ENCODE measurements at regions of chr2 and their contacts with region 1.

Region 1: DNA sequence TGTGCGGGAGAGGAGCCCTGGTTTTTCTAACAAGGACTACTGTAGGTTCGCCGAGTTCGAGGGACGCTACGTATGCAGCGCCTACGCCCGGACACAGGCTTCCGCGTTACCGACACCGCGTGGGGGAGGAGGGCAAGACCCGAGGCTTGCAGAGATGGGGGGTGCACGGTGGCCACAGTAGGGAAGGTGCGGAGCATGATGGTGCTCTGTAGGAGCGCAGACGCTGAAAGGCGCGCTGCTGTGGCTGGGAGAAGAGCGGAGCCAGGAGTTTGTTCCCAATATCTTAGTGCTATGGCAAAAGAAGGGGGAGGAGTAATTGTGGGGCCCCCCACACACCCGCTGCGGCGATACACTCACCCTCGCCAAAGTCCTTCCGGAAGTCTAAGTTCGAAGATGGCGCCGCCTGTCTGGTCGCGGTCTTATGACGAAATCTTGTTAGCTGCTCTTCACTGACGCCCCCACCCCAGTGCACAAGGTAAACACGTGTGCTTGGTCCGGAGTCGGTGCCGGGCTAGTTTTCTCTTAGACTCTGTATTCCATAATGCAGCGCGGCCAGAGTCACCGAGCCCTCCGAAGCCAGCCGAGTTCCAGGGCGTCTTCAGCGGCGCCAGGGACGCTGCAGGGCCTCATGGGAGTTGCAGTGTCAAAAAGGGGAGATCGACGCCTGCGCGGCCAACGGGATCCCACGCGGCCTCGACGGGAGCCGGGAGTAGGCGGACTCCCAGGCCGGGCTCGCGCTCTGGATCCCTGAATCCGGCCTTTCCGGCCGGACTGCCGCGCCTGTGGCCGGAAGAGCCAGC is at the start of gene GTF3C2:
- DNase-seq: peak; percentile 97
- H3K4me3 Mint-ChIP-seq: peak within 1 kb of the TSS; percentile 99
- H3K27ac Mint-ChIP-seq: peak within 1 kb of the TSS; percentile 100
- H3K4me1 Mint-ChIP-seq: peaks cover 42% of the 10 kb centered on the region
- H3K27me3 Mint-ChIP-seq: peaks cover 2% of the 10 kb centered on the region
- total RNA-seq, gene GTF3C2: 80.1 and 83.8 TPM in 2 replicates

Region 2: DNA sequence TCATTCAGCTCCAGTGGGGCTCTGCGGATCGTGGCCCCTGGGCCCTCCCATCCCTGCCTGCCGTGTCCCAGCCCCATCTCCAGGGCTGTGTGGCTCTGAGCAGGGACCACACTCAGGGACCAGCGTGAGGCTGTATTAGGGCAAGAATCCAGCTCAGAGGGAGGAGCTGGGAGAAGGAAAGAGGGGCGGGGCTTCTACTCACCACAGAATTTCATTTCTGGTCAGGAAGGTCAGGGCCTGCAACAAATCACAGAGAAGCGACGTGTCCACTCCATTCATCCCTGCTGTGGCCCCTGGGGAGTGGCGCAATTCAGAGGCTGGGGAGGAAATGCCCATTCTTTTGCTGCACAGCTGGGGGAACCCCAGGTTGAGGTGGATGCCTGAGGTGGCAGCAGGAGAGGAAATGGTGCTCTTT is 716.2 kb before region 1 on chr2:
- intact Hi-C with region 1: no loop called
- DNase-seq: no peak
- H3K4me3 Mint-ChIP-seq: no peak overlapping the region
- H3K27ac Mint-ChIP-seq: no peak overlapping the region
- H3K4me1 Mint-ChIP-seq: no peaks in the 10 kb centered on the region
- H3K27me3 Mint-ChIP-seq: peaks cover 19% of the 10 kb centered on the region

Region 3: GRCh38 chr2:27032495-27033252 is 323.9 kb before region 1 on chr2 and contains the start of gene TMEM214:
- intact Hi-C with region 1: loop called (anchors 2 kb)
- DNase-seq: peak; percentile 96
- H3K4me3 Mint-ChIP-seq: peak within 1 kb of the TSS; percentile 94
- H3K27ac Mint-ChIP-seq: peak within 1 kb of the TSS; percentile 89
- H3K4me1 Mint-ChIP-seq: peaks cover 45% of the 10 kb centered on the region
- H3K27me3 Mint-ChIP-seq: no peaks in the 10 kb centered on the region
- total RNA-seq, gene TMEM214: 93.4 and 98.6 TPM in 2 replicates

Region 4: GRCh38 chr2:27217217-27218121 is 139.1 kb before region 1 on chr2 and contains the start of gene CAD:
- intact Hi-C with region 1: loop called (anchors 2 kb)
- DNase-seq: peak; percentile 96
- H3K4me3 Mint-ChIP-seq: peak within 1 kb of the TSS; percentile 98
- H3K27ac Mint-ChIP-seq: peak within 1 kb of the TSS; percentile 98
- H3K4me1 Mint-ChIP-seq: peaks cover 38% of the 10 kb centered on the region
- H3K27me3 Mint-ChIP-seq: no peaks in the 10 kb centered on the region
- total RNA-seq, gene CAD: 144 and 159 TPM in 2 replicates

Region 5: DNA sequence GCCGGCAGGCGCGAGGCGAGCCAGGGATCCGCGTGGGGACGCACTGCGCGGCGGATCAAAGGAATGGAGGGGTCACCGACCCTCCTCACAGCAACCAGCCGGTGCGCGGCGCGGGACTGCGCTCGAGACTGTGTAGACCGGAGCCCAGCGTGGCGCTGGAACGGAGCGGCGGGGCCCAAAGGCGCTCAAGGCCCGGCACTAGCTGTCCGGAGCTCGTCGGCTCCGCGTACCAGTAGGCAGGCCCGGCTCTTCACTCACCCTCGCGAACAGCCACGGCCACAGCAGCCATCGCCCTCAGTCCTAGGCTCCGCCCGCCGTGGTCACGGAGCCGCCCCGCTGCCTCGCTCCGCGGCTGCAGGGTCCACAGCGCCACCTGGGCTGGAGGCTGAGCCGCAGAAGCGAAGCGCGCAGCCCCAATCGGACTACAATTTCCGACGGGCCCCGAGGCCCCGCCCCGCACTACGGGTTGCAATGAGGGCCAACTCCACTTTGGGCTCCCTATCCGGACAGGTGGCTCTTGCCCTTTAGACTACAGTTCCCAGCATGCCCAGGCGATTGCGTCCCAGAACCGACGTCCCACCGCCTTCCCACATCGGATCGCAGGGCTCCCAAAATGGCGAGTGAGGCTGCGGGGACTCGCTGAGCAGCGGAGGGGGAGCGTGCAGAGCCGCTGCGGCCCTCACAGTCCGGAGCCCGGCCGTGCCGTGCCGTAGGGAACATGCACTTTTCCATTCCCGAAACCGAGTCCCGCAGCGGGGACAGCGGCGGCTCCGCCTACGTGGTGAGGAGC is 13.6 kb after region 1 on chr2 and contains the starts of genes EIF2B4 and SNX17:
- intact Hi-C with region 1: loop called (anchors 1 kb)
- DNase-seq: peak; percentile 100
- H3K4me3 Mint-ChIP-seq: peak within 1 kb of the TSS; percentile 86
- H3K27ac Mint-ChIP-seq: peak within 1 kb of the TSS; percentile 98
- H3K4me1 Mint-ChIP-seq: peaks cover 34% of the 10 kb centered on the region
- H3K27me3 Mint-ChIP-seq: no peaks in the 10 kb centered on the region
- total RNA-seq, gene EIF2B4: 51.2 and 52.0 TPM in 2 replicates
- total RNA-seq, gene SNX17: 120 and 128 TPM in 2 replicates

Region 6: GRCh38 chr2:27428213-27428977 is 71.8 kb after region 1 on chr2 and contains the start of gene NRBP1:
- intact Hi-C with region 1: loop called (anchors 1 kb)
- DNase-seq: peak; percentile 99
- H3K4me3 Mint-ChIP-seq: peak within 1 kb of the TSS; percentile 97
- H3K27ac Mint-ChIP-seq: peak within 1 kb of the TSS; percentile 99
- H3K4me1 Mint-ChIP-seq: peaks cover 28% of the 10 kb centered on the region
- H3K27me3 Mint-ChIP-seq: peaks cover 2% of the 10 kb centered on the region
- total RNA-seq, gene NRBP1: 93.9 and 94.7 TPM in 2 replicates

Region 7: DNA sequence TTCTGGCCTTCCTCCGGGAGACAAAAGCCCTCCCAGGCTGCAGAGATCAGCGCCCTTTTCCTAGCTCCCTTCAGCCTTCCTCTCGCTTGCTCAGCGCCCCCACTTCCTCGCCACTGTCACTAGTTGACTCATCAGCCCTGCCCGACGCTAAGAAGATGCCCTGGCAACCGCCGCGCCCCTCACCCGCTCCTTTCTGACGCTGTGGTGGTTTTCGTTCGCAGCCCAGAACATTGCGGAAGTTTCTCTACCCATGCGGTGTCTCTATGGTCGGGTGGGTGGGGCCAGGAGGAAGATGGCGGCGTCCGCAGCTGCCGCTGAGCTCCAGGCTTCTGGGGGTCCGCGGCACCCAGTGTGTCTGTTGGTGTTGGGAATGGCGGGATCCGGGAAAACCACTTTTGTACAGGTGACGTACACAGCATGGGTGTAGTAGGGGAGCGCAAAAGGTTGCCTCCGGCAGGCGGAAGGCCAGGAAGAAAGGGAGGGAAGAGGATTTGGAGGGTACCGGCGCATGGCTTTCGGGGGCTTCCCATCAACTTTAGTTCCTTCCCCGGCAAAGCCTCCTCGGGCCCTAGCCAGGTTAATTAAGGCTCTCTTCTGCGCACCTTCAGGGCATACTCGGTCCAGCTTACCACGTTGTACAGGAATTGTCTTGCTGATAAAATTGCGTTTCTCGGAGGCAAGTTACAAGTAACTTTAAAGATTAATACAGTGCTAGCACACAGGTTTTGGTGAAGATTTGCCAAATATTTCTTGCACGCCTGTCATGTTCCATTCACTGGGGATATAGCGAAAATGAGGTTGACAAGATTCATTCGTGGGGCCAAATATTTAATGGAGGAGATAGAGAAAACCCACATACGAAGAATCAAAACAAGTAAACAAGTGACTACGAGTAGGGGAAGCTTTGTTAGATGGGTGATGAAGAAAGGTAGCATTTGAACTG is 272.5 kb after region 1 on chr2 and contains the starts of genes CCDC121 and GPN1:
- intact Hi-C with region 1: loop called (anchors 2 kb)
- DNase-seq: peak; percentile 98
- H3K4me3 Mint-ChIP-seq: no peak within 1 kb of the TSS
- H3K27ac Mint-ChIP-seq: no peak within 1 kb of the TSS
- H3K4me1 Mint-ChIP-seq: peaks cover 25% of the 10 kb centered on the region
- H3K27me3 Mint-ChIP-seq: no peaks in the 10 kb centered on the region
- total RNA-seq, gene CCDC121: 0.54 and 0.63 TPM in 2 replicates
- total RNA-seq, gene GPN1: 51.0 and 55.4 TPM in 2 replicates